Left colon (tissue), 2 donors: ENCODE measurements at regions of chr1 and their contacts with region 1.

Region 1: GRCh38 chr1:231357831-231358354 is 19.8 kb downstream of the SPRTN start:
- DNase-seq: no peak
- ATAC-seq: peak; percentile 91

Region 2: GRCh38 chr1:231407547-231408396 is 49.9 kb after region 1 on chr1:
- intact Hi-C with region 1: no loop called
- DNase-seq: no peak
- ATAC-seq: peak; percentile 91

Region 3: DNA sequence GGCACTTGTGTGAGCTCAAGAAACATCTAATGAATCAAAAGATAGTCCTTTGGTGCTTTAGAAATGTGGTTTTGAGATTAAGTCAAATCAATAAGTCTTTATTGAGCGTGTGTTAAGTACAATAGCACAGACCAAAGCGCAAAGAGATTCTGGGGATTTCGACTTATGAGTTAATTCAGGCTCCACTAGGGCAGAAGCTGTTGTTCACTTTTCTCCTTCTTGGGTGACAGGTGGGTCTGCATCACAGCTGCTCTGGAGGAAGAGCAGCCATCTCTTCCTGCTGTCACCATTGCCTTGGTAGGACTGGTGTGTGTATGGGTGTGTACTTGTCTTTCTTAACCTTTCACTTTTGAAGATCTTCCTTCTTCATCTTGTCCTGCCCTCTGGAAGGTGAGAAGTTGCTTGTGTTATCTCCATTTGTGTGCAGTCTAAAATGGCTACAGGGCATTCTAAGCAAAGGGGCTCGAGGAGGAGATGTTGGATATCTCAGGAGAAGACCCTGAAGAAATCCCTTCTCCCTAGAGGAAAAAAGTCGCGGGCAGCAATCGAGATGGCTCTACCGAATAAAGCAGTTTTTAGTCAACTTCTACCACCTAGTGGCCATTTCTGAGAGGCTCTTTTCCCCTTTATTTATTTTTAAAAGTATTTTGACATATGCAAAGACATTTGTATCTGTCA is 245.8 kb after region 1 on chr1:
- intact Hi-C with region 1: loop called in 1 of 2 experiments (anchors 5 kb)
- DNase-seq: peak in 1 of 2 donors; percentile 36
- ATAC-seq: peak; percentile 92